Astrocyte of the cerebellum (primary cell): ENCODE measurements at regions of chr11 and their contacts with region 1.

Region 1: GRCh38 chr11:111777094-111778046 is 11.2 kb upstream of the PPP2R1B start:
- DNase-seq: peak; percentile 65
- H3K4me3 ChIP-seq: no peak overlapping the region
- CTCF ChIP-seq: peak; percentile 72

Region 2: GRCh38 chr11:111688028-111688427 is 89.3 kb before region 1 on chr11:
- in situ Hi-C with region 1: loop called (anchors 5 kb)
- DNase-seq: no peak
- H3K4me3 ChIP-seq: no peak overlapping the region
- CTCF ChIP-seq: no peak

Region 3: DNA sequence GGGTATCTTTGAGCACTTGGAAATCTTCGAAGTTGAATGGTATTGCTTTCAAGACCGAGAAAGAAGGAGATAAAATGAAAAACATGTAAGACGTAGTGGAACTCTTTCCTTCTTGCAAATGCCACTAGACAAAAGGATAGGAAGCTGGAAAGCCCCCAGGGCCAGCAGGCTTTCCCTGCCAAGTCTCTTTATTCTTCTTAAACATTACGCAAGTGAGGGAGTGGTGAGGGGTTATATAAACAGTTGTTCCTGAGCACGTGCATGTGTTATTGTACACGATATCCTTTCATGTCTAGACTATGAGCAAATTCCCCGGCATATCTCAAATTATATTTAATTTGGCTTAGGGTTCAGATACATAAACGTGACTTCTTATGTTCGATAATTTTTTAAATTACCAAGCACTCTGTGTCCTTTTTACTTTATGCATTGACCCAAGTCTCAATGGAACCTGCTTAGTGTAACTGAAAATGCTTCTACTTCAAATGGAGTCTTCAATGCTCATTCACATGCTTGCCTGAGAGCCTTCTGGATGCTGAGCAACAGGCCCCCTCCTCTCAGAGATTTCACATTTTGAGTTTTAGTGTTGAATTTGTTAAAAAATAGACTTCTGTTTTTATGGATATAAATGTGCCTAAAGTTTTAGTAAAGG is 70.2 kb before region 1 on chr11:
- in situ Hi-C with region 1: no loop called
- DNase-seq: peak; percentile 93
- H3K4me3 ChIP-seq: no peak overlapping the region
- CTCF ChIP-seq: no peak

Region 4: GRCh38 chr11:111729087-111729830 is 48.1 kb before region 1 on chr11:
- in situ Hi-C with region 1: no loop called
- DNase-seq: no peak
- H3K4me3 ChIP-seq: no peak overlapping the region
- CTCF ChIP-seq: no peak

Region 5: GRCh38 chr11:111846636-111847035 is 69.3 kb after region 1 on chr11:
- in situ Hi-C with region 1: loop called (anchors 5 kb)
- DNase-seq: no peak
- H3K4me3 ChIP-seq: no peak overlapping the region
- CTCF ChIP-seq: no peak